Activated B cell treated with CpG ODN at 0.5 μM for 24 hours (primary cell): ENCODE measurements at regions of chr2 and their contacts with region 1.

Region 1: GRCh38 chr2:171160119-171160955 is at the start of gene TLK1:
- DNase-seq: peak; percentile 74
- ATAC-seq: peak; percentile 73
- H3K4me3 Mint-ChIP-seq: peak within 1 kb of the TSS; percentile 92
- H3K27ac Mint-ChIP-seq: peak within 1 kb of the TSS; percentile 98
- H3K4me1 Mint-ChIP-seq: peaks cover 60% of the 10 kb centered on the region
- H3K27me3 Mint-ChIP-seq: no peaks in the 10 kb centered on the region
- CTCF ChIP-seq: no peak
- total RNA-seq, gene TLK1: 123 and 125 TPM in 2 replicates

Region 2: GRCh38 chr2:170928824-170929685 is 231.3 kb before region 1 on chr2 and contains the start of gene GORASP2:
- CTCF ChIA-PET with region 1: interaction called, 4 read pairs
- POLR2A ChIA-PET with region 1: interaction called, 11 read pairs
- intact Hi-C with region 1: loop called (anchors 1 kb)
- DNase-seq: peak; percentile 96
- ATAC-seq: peak; percentile 93
- H3K4me3 Mint-ChIP-seq: peak within 1 kb of the TSS; percentile 90
- H3K27ac Mint-ChIP-seq: peak within 1 kb of the TSS; percentile 88
- H3K4me1 Mint-ChIP-seq: peaks cover 38% of the 10 kb centered on the region
- H3K27me3 Mint-ChIP-seq: no peaks in the 10 kb centered on the region
- CTCF ChIP-seq: peak; percentile 75
- total RNA-seq, gene GORASP2: 60.7 and 69.7 TPM in 2 replicates

Region 3: DNA sequence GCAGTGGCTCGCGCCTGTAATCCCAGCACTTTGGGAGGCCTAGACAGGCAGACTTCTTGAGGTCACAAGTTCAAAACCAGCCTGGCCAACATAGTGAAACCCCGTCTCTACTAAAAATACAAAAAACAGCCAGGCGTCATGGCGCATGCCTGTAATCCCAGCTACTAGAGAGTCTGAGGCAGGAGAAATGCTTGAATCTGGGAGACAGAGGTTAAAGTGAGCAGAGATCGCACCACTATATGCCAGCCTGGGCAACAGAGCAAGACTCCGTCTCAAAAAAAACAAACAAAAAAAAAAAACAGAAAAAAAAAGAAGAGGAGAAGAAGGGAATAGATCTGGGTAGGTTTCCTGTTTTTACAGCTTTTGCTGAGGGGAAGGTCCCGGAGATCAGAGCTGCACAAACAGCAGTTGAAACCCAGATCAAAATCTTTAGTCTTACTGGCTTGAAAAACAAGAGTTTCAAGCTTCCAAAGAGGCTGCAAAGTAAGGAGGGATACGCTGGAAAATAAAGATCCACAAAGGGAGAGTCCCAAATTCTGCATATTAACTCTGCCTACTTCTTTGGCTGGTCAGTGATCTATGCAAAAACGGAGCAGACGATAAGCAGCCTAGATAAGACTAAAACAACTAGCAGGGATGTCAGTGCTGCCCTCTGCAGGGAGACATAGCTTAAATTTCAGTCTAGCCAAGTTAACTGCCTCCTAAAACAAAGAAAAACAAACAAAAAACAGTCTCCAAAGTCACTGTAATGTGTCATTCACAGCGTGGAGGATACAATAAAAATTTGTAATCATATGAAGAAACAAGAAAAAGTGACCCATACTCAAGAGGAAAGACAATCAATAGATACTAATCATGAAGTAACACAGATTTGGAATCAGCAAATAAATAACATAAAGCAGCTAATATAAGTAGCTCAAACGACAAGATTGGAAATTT is 73.7 kb before region 1 on chr2:
- CTCF ChIA-PET with region 1: interaction called, 5 read pairs
- POLR2A ChIA-PET with region 1: interaction called, 10 read pairs
- intact Hi-C with region 1: loop called (anchors 5 kb)
- DNase-seq: no peak
- ATAC-seq: peak; percentile 57
- H3K4me3 Mint-ChIP-seq: no peak overlapping the region
- H3K27ac Mint-ChIP-seq: peak overlapping the region; percentile 7
- H3K4me1 Mint-ChIP-seq: peaks cover 36% of the 10 kb centered on the region
- H3K27me3 Mint-ChIP-seq: no peaks in the 10 kb centered on the region
- CTCF ChIP-seq: peak; percentile 67

Region 4: GRCh38 chr2:171210864-171211431 is 50.6 kb after region 1 on chr2:
- CTCF ChIA-PET with region 1: no interaction called
- POLR2A ChIA-PET with region 1: no interaction called
- intact Hi-C with region 1: loop called (anchors 2 kb)
- DNase-seq: no peak
- ATAC-seq: peak; percentile 72
- H3K4me3 Mint-ChIP-seq: peak overlapping the region; percentile 65
- H3K27ac Mint-ChIP-seq: peak overlapping the region; percentile 81
- H3K4me1 Mint-ChIP-seq: peaks cover 16% of the 10 kb centered on the region
- H3K27me3 Mint-ChIP-seq: no peaks in the 10 kb centered on the region
- CTCF ChIP-seq: no peak

Region 5: GRCh38 chr2:171325886-171326585 is 165.7 kb after region 1 on chr2:
- CTCF ChIA-PET with region 1: interaction called, 3 read pairs
- POLR2A ChIA-PET with region 1: interaction called, 13 read pairs
- intact Hi-C with region 1: loop called (anchors 2 kb)
- DNase-seq: no peak
- ATAC-seq: peak; percentile 64
- H3K4me3 Mint-ChIP-seq: peak overlapping the region; percentile 82
- H3K27ac Mint-ChIP-seq: peak overlapping the region; percentile 92
- H3K4me1 Mint-ChIP-seq: peaks cover 87% of the 10 kb centered on the region
- H3K27me3 Mint-ChIP-seq: no peaks in the 10 kb centered on the region
- CTCF ChIP-seq: no peak

Region 6: GRCh38 chr2:171416009-171416926 is 255.9 kb after region 1 on chr2:
- CTCF ChIA-PET with region 1: interaction called, 51 read pairs
- POLR2A ChIA-PET with region 1: interaction called, 40 read pairs
- intact Hi-C with region 1: loop called (anchors 1 kb)
- DNase-seq: peak; percentile 52
- ATAC-seq: peak; percentile 97
- H3K4me3 Mint-ChIP-seq: peak overlapping the region; percentile 3
- H3K27ac Mint-ChIP-seq: peak overlapping the region; percentile 82
- H3K4me1 Mint-ChIP-seq: peaks cover 19% of the 10 kb centered on the region
- H3K27me3 Mint-ChIP-seq: no peaks in the 10 kb centered on the region
- CTCF ChIP-seq: peak; percentile 94

Region 7: DNA sequence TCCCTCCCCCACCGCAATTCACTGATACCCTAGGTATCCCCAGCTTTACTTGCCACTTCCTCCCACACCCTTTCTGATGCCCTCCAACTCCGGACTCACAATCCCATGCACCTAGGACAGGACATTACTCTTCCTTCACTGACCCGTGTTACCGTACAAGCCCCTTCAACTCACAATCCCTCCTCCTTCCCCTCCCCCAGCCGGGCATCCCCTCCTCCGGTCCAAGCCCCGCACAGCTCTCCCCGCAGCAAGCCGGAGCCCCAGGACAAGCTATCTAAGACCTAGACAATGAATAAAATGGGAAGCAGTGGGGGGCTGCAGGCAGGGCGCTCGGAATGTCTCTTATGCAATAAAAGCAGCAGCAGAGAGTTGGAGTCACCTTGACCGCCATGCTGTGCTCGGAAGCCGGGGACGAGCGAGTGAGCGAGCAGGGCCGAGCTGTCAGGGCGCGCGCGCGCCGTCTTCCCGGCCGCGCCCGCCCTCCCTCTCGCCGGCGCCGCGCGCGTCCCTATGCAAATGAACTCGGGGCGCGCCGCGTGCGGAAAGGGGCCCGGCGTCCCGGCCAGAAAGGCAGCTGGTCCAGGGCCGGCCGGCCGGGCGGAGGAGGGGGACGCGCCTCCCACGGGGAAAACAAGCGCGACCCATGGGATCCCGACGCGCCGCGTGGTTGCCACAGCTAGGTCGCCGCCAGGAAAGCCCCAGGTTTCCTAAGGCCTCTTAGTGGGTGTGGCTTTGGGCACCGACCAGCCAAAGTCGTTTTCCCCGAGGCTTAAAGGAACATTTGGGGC is 733.7 kb after region 1 on chr2 and contains the start of gene SLC25A12:
- CTCF ChIA-PET with region 1: no interaction called
- POLR2A ChIA-PET with region 1: no interaction called
- intact Hi-C with region 1: loop called (anchors 10 kb)
- DNase-seq: peak; percentile 81
- ATAC-seq: peak; percentile 95
- H3K4me3 Mint-ChIP-seq: peak within 1 kb of the TSS; percentile 98
- H3K27ac Mint-ChIP-seq: peak within 1 kb of the TSS; percentile 85
- H3K4me1 Mint-ChIP-seq: peaks cover 23% of the 10 kb centered on the region
- H3K27me3 Mint-ChIP-seq: no peaks in the 10 kb centered on the region
- CTCF ChIP-seq: no peak
- total RNA-seq, gene SLC25A12: 18.8 and 22.2 TPM in 2 replicates